ENCODE measurements at regions of chr4 and their contacts with region 1.

Region 1: GRCh38 chr4:122732329-122733026 is at the start of gene BBS12:
- DNase-seq: peak; percentile 100
- H3K4me3 Mint-ChIP-seq: peak within 1 kb of the TSS; percentile 91
- H3K27ac Mint-ChIP-seq: peak within 1 kb of the TSS; percentile 83
- H3K4me1 Mint-ChIP-seq: peaks cover 17% of the 10 kb centered on the region
- H3K27me3 Mint-ChIP-seq: no peaks in the 10 kb centered on the region
- total RNA-seq, gene BBS12: 1.7 to 2.2 TPM

Region 2: DNA sequence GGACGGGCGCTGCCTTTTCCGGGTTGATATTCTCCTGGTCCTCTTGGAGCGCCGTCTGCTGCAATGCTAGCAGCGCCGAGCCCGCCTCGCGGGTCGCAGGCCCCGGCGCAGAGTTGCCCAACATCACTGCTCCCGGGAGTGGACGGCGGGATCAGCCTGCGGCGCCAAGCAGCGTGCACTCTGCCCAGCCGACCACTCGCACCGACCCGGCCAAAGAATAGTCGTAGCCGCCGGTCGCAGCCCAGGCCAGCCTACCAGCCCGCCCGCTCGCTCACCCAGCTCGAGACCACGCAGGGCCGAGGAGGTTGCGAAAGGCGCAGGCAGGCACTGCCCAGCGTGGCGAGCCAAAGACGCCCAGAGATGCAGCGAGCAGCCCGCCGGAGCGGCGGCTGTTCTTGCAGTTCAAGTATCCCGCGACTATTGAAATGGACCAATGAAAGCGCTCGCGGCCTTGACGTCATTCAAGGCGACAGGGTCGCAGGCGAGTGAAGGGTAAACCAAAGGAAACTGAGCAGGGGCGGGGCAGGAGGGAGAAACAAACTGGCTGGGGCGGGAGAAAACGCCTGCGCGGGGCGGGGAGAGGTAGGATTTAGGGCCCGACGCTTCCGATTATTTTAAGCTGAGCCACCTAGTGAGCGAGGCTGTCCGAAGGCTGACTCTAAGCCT is 908.8 kb before region 1 on chr4 and contains the start of gene CCNA2:
- CTCF ChIA-PET with region 1: no interaction called
- intact Hi-C with region 1: loop called (anchors 5 kb)
- DNase-seq: peak; percentile 99
- H3K4me3 Mint-ChIP-seq: peak within 1 kb of the TSS; percentile 98
- H3K27ac Mint-ChIP-seq: peak within 1 kb of the TSS; percentile 86
- H3K4me1 Mint-ChIP-seq: peaks cover 20% of the 10 kb centered on the region
- H3K27me3 Mint-ChIP-seq: no peaks in the 10 kb centered on the region
- total RNA-seq, gene CCNA2: 133 to 138 TPM

Region 3: GRCh38 chr4:122151982-122152710 is 580.3 kb before region 1 on chr4 and contains the start of gene BLTP1:
- CTCF ChIA-PET with region 1: no interaction called
- intact Hi-C with region 1: loop called (anchors 2 kb)
- DNase-seq: peak; percentile 88
- H3K4me3 Mint-ChIP-seq: peak within 1 kb of the TSS; percentile 95
- H3K27ac Mint-ChIP-seq: peak within 1 kb of the TSS; percentile 96
- H3K4me1 Mint-ChIP-seq: peaks cover 52% of the 10 kb centered on the region
- H3K27me3 Mint-ChIP-seq: no peaks in the 10 kb centered on the region
- total RNA-seq, gene BLTP1: 20.5 to 23.6 TPM

Region 4: GRCh38 chr4:122710434-122711308 is 21.8 kb before region 1 on chr4:
- CTCF ChIA-PET with region 1: interaction called, 3 read pairs
- intact Hi-C with region 1: loop called (anchors 1 kb)
- DNase-seq: peak; percentile 79
- H3K4me3 Mint-ChIP-seq: peak overlapping the region; percentile 54
- H3K27ac Mint-ChIP-seq: peak overlapping the region; percentile 96
- H3K4me1 Mint-ChIP-seq: peaks cover 80% of the 10 kb centered on the region
- H3K27me3 Mint-ChIP-seq: no peaks in the 10 kb centered on the region

Region 5: DNA sequence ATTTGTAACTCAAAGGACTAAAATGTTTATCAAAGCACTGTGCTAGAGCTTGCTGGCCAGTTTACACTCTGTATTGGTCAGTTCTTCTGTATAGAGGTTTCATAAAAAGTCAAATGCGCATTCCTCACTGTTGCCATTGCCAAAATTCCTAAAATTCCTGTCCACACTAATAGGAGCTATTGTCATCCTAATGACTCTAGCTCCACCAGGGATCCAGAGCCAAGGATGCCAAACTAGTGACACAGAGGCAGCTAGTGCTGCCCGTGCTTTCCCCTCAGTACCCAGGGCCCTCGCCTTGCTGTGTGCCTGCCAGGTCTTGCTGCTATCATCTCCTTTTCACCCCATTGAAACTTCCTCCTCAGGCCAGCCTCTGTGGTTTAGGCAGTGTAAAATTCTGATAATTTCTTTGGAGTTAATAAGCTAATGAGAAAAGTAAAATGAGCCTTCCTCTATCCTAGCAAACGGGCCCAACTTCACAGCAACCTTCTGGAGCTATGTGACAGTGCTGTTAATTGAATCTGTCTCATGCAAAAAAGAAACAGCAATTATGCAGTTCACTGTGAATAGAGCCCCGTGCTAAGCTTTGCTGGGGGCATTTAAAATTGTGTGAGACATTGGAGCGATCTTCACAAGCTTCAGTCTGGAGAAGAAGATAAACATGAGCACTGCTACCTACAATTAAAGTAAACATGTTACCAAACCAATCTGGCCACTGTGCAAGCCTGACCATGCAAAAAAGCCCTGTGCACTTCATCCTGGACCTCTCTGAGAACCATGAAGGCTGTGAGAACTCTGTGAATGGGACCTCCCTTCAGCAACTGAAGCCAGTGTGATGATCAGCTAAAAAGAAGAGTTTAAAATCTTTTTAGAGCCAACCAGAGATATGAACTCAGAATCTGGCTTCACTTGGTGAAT is 51.1 kb after region 1 on chr4:
- CTCF ChIA-PET with region 1: no interaction called
- intact Hi-C with region 1: loop called (anchors 1 kb)
- DNase-seq: no peak
- H3K4me3 Mint-ChIP-seq: no peak overlapping the region
- H3K27ac Mint-ChIP-seq: no peak overlapping the region
- H3K4me1 Mint-ChIP-seq: peaks cover 19% of the 10 kb centered on the region
- H3K27me3 Mint-ChIP-seq: peaks cover 16% of the 10 kb centered on the region

Region 6: GRCh38 chr4:122930862-122931261 is 198.4 kb after region 1 on chr4:
- CTCF ChIA-PET with region 1: interaction called, 9 read pairs
- intact Hi-C with region 1: loop called (anchors 1 kb)
- DNase-seq: no peak
- H3K4me3 Mint-ChIP-seq: no peak overlapping the region
- H3K27ac Mint-ChIP-seq: no peak overlapping the region
- H3K4me1 Mint-ChIP-seq: peaks cover 4% of the 10 kb centered on the region
- H3K27me3 Mint-ChIP-seq: no peaks in the 10 kb centered on the region

Region 7: DNA sequence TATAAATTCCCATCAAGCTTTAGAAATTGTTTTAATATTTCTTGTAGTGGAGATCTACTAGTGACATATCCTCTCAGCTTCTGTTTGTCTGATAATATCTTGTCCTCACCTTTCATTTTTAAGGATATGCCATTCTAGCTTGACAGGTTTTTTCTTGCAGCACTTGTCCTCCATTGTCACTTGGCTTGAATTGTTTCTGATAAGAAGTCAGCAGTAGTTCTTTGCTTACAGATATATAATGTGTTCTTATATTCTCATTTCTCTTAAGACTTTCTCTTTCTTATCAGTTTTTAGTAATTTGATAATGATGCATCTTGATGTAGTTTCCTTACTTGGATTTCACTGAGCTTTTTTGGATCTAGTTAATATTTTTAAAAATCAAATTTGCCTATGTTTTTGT is 310.5 kb after region 1 on chr4:
- CTCF ChIA-PET with region 1: no interaction called
- intact Hi-C with region 1: no loop called
- DNase-seq: no peak
- H3K4me3 Mint-ChIP-seq: no peak overlapping the region
- H3K27ac Mint-ChIP-seq: peak overlapping the region; percentile 0
- H3K4me1 Mint-ChIP-seq: peaks cover 3% of the 10 kb centered on the region
- H3K27me3 Mint-ChIP-seq: no peaks in the 10 kb centered on the region

Region 8: GRCh38 chr4:123055943-123056342 is 323.5 kb after region 1 on chr4:
- CTCF ChIA-PET with region 1: no interaction called
- intact Hi-C with region 1: no loop called
- DNase-seq: no peak
- H3K4me3 Mint-ChIP-seq: no peak overlapping the region
- H3K27ac Mint-ChIP-seq: no peak overlapping the region
- H3K4me1 Mint-ChIP-seq: no peaks in the 10 kb centered on the region
- H3K27me3 Mint-ChIP-seq: no peaks in the 10 kb centered on the region

Measured in activated naive CD4-positive, alpha-beta T cell treated with anti-CD3 and anti-CD28 coated beads for 36 hours (primary cell).